ENCODE measurements at regions of chr10 and their contacts with region 1.

Region 1: DNA sequence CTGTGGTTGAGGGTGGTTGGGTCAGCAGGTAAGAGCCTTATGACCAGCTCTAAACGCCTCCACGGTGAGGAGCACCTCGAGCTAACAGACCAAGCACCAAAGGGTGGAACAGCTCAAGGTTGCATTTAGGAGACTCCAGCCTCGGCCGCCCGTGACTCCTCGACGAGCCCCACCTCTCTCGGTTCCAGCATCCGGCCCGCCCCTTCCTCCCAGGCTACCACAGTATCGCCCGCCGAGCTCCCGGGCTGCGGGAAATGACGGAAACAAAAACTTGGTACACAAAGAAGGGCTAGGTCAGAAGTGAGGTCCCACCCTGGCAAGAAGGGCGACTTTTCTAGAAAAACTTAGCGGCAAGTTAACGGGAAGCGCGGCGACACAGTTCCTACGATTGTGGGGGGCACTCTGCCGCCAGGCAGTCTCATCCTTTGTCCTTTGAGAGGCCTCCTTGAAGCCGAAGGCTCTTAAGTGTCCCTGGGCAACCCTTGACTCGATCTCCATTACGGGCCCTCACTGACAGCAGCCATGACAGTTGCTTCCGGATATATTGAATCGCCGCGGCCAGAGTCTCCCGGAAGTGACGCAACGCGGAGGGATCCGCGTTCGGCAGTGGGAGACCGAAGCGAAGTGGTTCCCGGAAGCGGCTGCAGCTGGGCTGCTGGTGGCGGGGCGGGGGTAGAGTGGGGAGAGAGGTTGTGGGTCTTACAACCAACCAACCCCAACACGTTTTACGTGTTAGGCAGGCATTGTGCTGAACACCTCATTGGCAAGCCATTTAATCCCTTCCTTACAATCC is 40.2 kb upstream of the ZNF518A start:
- DNase-seq: peak; percentile 85
- ATAC-seq: peak; percentile 94
- H3K4me3 ChIP-seq: peak overlapping the region; percentile 83
- H3K27ac ChIP-seq: peak overlapping the region; percentile 92
- H3K4me1 ChIP-seq: peaks cover 13% of the 10 kb centered on the region
- H3K27me3 ChIP-seq: peaks cover 20% of the 10 kb centered on the region
- CTCF ChIP-seq: no peak

Region 2: GRCh38 chr10:96043033-96043932 is 46.6 kb before region 1 on chr10 and contains the start of gene CCNJ:
- CTCF ChIA-PET with region 1: no interaction called
- POLR2A ChIA-PET with region 1: no interaction called
- intact Hi-C with region 1: loop called (anchors 2 kb)
- DNase-seq: peak; percentile 87
- ATAC-seq: peak; percentile 81
- H3K4me3 ChIP-seq: peak within 1 kb of the TSS; percentile 79
- H3K27ac ChIP-seq: peak within 1 kb of the TSS; percentile 17
- H3K4me1 ChIP-seq: peaks cover 16% of the 10 kb centered on the region
- H3K27me3 ChIP-seq: no peaks in the 10 kb centered on the region
- CTCF ChIP-seq: no peak
- total RNA-seq, gene CCNJ: 3.2 and 3.9 TPM in 2 replicates

Region 3: GRCh38 chr10:96129387-96130325 is 39.8 kb after region 1 on chr10 and contains the start of gene ZNF518A:
- CTCF ChIA-PET with region 1: no interaction called
- POLR2A ChIA-PET with region 1: interaction called, 4 read pairs
- intact Hi-C with region 1: loop called (anchors 1 kb)
- DNase-seq: peak; percentile 43
- ATAC-seq: peak; percentile 64
- H3K4me3 ChIP-seq: peak within 1 kb of the TSS; percentile 70
- H3K27ac ChIP-seq: peak within 1 kb of the TSS; percentile 39
- H3K4me1 ChIP-seq: peaks cover 9% of the 10 kb centered on the region; the same call in 1 of the 2 replicates
- H3K27me3 ChIP-seq: peaks cover 21% of the 10 kb centered on the region
- CTCF ChIP-seq: no peak
- total RNA-seq, gene ZNF518A: 0.69 TPM in 2 replicates